ENCODE measurements at regions of chr3 and their contacts with region 1.

Region 1: DNA sequence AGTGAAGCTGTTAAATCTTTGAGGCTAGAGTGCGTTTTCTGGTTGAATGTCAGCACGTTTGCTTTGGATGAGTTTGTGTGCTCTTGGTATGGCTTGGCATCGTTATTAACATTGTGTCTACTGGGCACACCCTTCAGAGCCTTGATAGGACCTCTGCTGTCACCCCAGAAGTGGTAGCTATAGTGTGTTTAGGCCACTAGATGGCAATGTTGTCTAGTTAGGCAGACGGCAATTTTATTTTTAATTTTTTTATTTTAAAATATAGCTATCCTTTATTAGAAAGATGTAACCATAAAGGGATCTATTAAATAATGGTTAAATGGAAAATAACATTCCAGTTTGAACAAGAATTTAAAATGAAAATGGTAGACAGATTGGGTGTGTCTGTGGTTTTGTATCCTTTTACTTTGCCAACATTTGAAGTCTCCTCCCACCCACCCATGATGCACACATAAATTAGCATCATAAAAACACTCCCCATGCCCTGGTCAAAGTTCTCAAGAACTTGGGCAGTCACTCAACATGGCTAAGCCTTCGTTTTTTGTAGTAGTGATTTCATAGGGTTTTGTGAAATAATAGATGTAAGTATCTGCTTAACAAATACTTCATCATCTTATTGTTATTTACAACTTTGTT is 200.7 kb downstream of the KCNH8 start:
- DNase-seq: no peak
- H3K4me3 ChIP-seq: no peak overlapping the region
- H3K27ac ChIP-seq: no peak overlapping the region
- H3K4me1 ChIP-seq: no peaks in the 10 kb centered on the region
- H3K27me3 ChIP-seq: no peaks in the 10 kb centered on the region
- CTCF ChIP-seq: peak in 3 of 4 experiments; percentile 35 to 52 (median 45)
- POLR2A ChIP-seq: no peak

Region 2: DNA sequence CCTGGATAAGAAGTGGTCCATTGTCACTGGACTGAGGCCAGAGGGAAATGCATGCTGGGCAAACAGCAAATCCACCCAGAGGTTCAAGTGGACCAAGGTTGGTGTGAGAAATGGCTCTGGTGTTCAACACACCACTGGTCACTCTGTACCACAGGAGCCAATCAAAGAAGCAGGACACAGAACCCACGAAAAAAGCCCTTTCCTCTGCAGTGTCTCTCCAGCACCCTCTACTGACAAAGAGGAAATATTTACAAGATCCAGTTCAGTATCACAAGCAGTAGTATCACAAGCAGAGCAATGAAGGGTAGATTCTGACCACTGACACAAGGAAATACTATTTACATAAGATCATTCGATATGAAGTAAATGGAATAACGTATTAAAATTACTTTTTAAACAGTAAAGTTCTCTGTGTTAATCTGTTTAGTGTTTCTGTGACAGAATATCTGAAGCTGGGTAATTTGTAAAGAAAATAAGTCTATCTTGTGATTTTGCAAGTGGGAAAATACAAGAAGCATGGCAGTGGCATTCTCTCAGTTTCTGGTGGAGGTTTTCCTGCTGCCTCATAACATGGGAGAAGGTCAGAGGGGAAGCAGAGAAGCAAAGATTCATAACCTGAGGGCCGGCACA is 194.3 kb after region 1 on chr3:
- intact Hi-C with region 1: loop called (anchors 2 kb)
- DNase-seq: no peak
- H3K4me3 ChIP-seq: no peak overlapping the region
- H3K27ac ChIP-seq: no peak overlapping the region
- H3K4me1 ChIP-seq: no peaks in the 10 kb centered on the region
- H3K27me3 ChIP-seq: no peaks in the 10 kb centered on the region
- CTCF ChIP-seq: peak in 3 of 4 experiments; percentile 15 to 37 (median 22)
- POLR2A ChIP-seq: no peak

Region 3: GRCh38 chr3:19866751-19867347 is 517.8 kb after region 1 on chr3:
- intact Hi-C with region 1: loop called (anchors 10 kb)
- DNase-seq: peak; percentile 30
- H3K4me3 ChIP-seq: no peak overlapping the region
- H3K27ac ChIP-seq: no peak overlapping the region
- H3K4me1 ChIP-seq: no peaks in the 10 kb centered on the region
- H3K27me3 ChIP-seq: no peaks in the 10 kb centered on the region
- CTCF ChIP-seq: peak; percentile 27 to 74 (median 64)
- POLR2A ChIP-seq: no peak

Measured in prostate gland (tissue), 2 donors.